ENCODE measurements at regions of chr20 and their contacts with region 1.

Region 1: DNA sequence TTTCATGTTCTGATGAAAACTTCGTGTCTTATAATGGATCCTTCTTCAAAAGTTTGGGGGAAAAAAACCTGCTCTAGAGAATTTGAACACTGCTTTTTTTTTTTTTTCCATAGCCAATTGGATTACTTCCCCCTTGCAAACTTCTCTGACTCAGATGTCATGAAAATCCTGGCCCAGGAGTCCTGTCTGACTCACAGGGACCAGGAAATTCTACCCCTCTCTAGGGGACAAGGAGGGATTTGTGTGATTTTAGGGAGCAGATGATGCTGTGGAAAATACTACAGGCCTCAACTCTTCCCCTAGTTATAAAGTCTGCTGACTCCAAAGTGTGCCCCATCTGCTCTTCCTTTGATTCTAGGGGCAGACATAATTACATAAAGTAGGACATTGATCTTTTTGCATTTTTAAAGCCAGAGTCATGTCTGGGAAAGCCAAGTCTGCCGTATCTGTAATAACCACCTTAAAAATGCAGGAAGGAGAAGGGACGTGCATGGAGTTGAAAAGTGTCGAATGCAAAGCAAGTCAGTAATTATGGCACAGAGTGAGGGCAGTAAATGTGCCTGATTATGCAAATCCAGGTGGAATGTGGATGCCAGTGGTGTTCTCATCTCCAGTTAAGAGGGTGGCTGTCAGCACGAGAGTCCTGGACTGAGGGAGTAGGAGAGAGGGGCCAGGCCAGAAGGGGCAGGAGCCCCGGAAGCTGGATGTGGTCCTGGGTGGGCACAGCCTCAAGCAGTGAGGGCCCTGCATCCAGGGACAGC is 144.3 kb upstream of the SULF2 start:
- DNase-seq: no peak
- H3K4me3 ChIP-seq: no peak overlapping the region
- H3K27ac ChIP-seq: no peak overlapping the region
- H3K4me1 ChIP-seq: no peaks in the 10 kb centered on the region
- H3K27me3 ChIP-seq: peaks cover 3% of the 10 kb centered on the region
- CTCF ChIP-seq: no peak
- POLR2A ChIP-seq: no peak

Region 2: GRCh38 chr20:47725248-47725973 is 204.1 kb before region 1 on chr20:
- intact Hi-C with region 1: loop called (anchors 10 kb)
- DNase-seq: peak; percentile 65
- H3K4me3 ChIP-seq: no peak overlapping the region
- H3K27ac ChIP-seq: no peak overlapping the region
- H3K4me1 ChIP-seq: no peaks in the 10 kb centered on the region
- H3K27me3 ChIP-seq: no peaks in the 10 kb centered on the region
- CTCF ChIP-seq: peak; percentile 75 to 87 (median 83)
- POLR2A ChIP-seq: no peak

Region 3: GRCh38 chr20:47857566-47858471 is 71.7 kb before region 1 on chr20:
- intact Hi-C with region 1: loop called (anchors 5 kb)
- DNase-seq: peak; percentile 37
- H3K4me3 ChIP-seq: no peak overlapping the region
- H3K27ac ChIP-seq: peak overlapping the region; percentile 63 to 65
- H3K4me1 ChIP-seq: no peaks in the 10 kb centered on the region
- H3K27me3 ChIP-seq: no peaks in the 10 kb centered on the region
- CTCF ChIP-seq: no peak
- POLR2A ChIP-seq: no peak

Region 4: GRCh38 chr20:48075741-48076488 is 146.4 kb after region 1 on chr20:
- intact Hi-C with region 1: no loop called
- DNase-seq: no peak
- H3K4me3 ChIP-seq: no peak overlapping the region
- H3K27ac ChIP-seq: no peak overlapping the region
- H3K4me1 ChIP-seq: no peaks in the 10 kb centered on the region
- H3K27me3 ChIP-seq: no peaks in the 10 kb centered on the region
- CTCF ChIP-seq: no peak
- POLR2A ChIP-seq: no peak

Region 5: GRCh38 chr20:48597405-48598302 is 668.1 kb after region 1 on chr20:
- intact Hi-C with region 1: loop called (anchors 10 kb)
- DNase-seq: no peak
- H3K4me3 ChIP-seq: no peak overlapping the region
- H3K27ac ChIP-seq: no peak overlapping the region
- H3K4me1 ChIP-seq: peaks cover 2% of the 10 kb centered on the region
- H3K27me3 ChIP-seq: no peaks in the 10 kb centered on the region
- CTCF ChIP-seq: no peak
- POLR2A ChIP-seq: no peak

Measured in prostate gland (tissue), 2 donors.